ENCODE measurements at regions of chr4 and their contacts with region 1.

Region 1: DNA sequence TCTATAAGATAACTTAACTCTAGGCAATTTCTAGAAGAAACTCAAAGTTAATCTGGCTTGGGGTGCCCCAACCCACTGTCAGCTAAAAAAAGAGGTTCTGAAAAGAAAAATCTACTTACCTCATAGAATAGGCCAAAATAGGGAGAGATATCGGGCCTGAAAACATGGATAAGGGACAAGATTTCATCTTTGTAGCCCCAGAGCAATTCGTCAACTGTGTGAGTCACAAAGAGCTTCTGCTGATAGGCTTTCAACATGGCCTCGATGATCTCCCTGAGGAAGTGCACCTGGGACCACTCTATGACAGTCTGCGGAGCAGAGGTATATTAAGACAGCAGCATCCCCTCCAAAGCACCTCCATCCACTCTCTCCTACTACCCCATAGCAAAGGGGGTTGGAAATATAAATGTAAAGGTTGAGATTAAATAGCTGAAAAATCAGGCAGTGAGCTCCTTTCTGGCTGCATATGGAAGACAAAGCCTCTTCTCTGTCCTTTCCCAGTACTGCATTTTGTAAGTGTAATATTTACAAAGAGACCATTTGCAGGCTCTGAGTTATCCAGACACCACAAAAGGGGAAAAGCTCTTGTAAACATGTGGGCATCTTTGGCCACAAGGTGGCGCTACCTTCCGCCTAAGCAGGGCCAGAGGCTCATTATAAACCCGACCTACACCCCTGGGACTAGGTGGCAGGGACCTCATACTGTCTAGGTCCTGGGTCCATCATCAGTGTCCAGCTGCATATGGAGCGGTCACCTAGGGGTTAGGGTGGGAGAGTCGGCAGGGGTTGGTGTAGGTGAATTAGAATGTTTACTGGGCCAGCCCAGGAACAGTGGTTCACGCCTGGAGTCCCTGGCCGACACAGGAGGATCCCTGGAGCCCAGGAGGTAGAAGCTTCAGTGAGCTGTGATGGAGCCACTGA is 31.5 kb upstream of the NUP54 start:
- DNase-seq: peak; percentile 59 to 93
- H3K4me3 ChIP-seq: no peak overlapping the region
- H3K27ac ChIP-seq: no peak overlapping the region
- H3K4me1 ChIP-seq: no peaks in the 10 kb centered on the region
- H3K27me3 ChIP-seq: no peaks in the 10 kb centered on the region
- CTCF ChIP-seq: peak; percentile 77 to 87 (median 86)
- EP300 ChIP-seq: no peak
- POLR2A ChIP-seq: no peak
- RAD21 ChIP-seq: peak; percentile 95

Region 2: DNA sequence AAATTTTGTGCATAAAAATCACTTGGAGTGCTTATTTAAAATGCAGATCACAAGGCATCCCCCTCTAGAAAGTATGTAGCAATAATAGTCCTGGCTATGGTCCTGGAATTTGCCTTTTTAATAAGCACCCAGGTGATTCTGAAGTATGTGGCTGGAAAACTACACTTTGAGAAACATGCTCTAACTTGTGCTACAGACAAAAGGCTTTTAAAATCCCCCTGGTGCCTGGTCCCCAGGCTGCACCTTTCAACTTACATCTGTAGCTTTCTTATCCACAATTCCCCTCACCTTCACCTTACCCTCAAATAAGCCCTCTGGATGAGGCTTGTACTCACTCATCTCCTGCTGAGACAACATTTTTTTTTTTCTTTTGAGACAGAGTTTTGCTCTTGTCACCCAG is 84.1 kb before region 1 on chr4:
- CTCF ChIA-PET with region 1: no interaction called
- POLR2A ChIA-PET with region 1: no interaction called
- DNase-seq: no peak
- H3K4me3 ChIP-seq: no peak overlapping the region
- H3K27ac ChIP-seq: no peak overlapping the region
- H3K4me1 ChIP-seq: no peaks in the 10 kb centered on the region
- H3K27me3 ChIP-seq: no peaks in the 10 kb centered on the region
- CTCF ChIP-seq: no peak
- EP300 ChIP-seq: no peak
- POLR2A ChIP-seq: no peak
- RAD21 ChIP-seq: no peak

Region 3: DNA sequence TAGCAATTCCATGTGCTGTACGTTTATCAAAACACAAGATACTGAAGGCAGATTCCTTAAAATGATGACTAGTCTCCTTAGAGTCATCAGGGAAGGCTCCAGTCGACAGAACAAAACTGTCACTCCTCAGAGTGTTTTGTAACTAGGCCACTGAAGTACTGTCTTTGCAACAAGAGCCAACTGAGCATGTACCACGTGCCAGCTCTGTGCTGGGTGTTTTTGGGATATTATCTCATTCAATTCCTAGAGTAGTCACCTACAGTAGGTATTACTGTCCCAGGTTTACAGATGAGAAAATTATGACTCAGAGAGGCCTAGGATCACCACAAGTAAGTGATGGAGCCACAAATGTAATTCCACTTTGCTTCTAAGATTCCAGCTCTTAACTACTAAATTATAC is 13.2 kb before region 1 on chr4:
- CTCF ChIA-PET with region 1: interaction called, 14 read pairs
- POLR2A ChIA-PET with region 1: no interaction called
- DNase-seq: no peak
- H3K4me3 ChIP-seq: no peak overlapping the region
- H3K27ac ChIP-seq: no peak overlapping the region
- H3K4me1 ChIP-seq: no peaks in the 10 kb centered on the region
- H3K27me3 ChIP-seq: no peaks in the 10 kb centered on the region
- CTCF ChIP-seq: no peak
- EP300 ChIP-seq: no peak
- POLR2A ChIP-seq: no peak
- RAD21 ChIP-seq: no peak

Region 4: DNA sequence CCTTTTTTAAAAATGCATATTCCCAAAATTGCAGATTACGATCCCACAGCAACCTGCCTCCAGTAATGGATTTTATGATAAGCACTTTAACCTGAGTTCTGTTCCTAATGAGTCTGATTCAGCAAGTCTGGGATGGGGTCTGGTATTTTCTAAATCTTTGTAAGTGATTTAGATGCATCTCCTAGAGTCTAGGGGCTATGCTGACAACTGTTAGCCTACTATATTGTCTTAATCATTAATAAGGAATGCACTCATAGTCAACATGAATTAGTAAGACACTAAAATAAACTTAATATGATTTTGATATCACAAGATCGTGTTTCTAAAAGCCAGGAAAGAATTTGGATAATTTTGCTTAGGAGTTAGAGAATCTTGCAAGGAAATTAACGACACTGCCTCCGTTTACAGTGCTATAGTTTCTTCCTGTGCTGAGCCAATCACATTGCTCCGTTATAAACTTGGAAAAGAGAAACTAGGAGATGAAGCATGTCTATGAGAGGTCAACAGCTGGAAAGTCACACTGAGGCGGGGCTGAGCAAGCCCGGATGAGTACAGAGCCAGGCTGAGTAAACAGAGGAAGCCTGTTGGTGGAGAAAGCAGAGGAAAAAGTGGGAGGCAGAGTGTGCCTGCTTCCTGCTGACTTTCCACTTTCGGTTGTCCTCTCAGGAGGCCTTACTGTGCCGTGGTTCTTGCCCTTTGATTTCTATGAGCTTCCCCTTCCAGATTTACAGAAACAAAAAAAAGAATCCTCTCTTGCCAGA is 28.5 kb after region 1 on chr4:
- CTCF ChIA-PET with region 1: interaction called, 11 read pairs
- POLR2A ChIA-PET with region 1: no interaction called
- DNase-seq: no peak
- H3K4me3 ChIP-seq: no peak overlapping the region
- H3K27ac ChIP-seq: no peak overlapping the region
- H3K4me1 ChIP-seq: peaks cover 0 to 3% (median 2%) of the 10 kb centered on the region in 4 experiments; a peak in 4 of 7 replicates
- H3K27me3 ChIP-seq: no peaks in the 10 kb centered on the region
- CTCF ChIP-seq: no peak
- EP300 ChIP-seq: no peak
- POLR2A ChIP-seq: no peak
- RAD21 ChIP-seq: no peak

Region 5: DNA sequence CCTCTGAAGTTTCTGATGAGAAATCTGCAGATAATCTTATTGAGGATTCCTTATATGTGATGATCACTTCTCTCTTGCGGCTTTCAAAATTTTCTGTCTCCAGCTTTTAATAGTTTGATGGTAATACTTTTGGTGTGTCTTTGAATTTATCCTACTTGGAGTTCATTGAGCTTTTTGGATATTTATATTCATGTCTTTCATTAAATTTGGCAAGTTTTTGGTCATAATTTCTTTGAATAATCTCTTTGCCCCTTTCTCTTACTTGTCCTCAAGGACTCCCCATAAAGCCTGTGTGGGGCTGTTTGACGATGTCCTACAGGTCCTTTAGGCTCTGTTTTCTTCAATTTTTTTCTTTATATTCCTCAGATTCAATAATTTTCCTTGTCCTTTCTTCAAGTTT is 60.6 kb after region 1 on chr4:
- CTCF ChIA-PET with region 1: interaction called, 11 read pairs
- POLR2A ChIA-PET with region 1: no interaction called
- DNase-seq: no peak
- H3K4me3 ChIP-seq: no peak overlapping the region
- H3K27ac ChIP-seq: no peak overlapping the region
- H3K4me1 ChIP-seq: peaks cover 0 to 3% (median 0%) of the 10 kb centered on the region in 4 experiments; a peak in 2 of 7 replicates
- H3K27me3 ChIP-seq: no peaks in the 10 kb centered on the region
- CTCF ChIP-seq: no peak
- EP300 ChIP-seq: no peak
- POLR2A ChIP-seq: no peak
- RAD21 ChIP-seq: no peak

Region 6: GRCh38 chr4:76305971-76306881 is 126.6 kb after region 1 on chr4 and contains the start of gene STBD1:
- CTCF ChIA-PET with region 1: interaction called, 30 read pairs
- POLR2A ChIA-PET with region 1: no interaction called
- DNase-seq: peak; percentile 47 to 90
- H3K4me3 ChIP-seq: peak within 1 kb of the TSS; percentile 60 to 81 (median 72)
- H3K27ac ChIP-seq: no peak within 1 kb of the TSS
- H3K4me1 ChIP-seq: no peaks in the 10 kb centered on the region; a peak in 1 of 7 replicates
- H3K27me3 ChIP-seq: peaks cover 2 to 17% (median 11%) of the 10 kb centered on the region in 4 experiments
- CTCF ChIP-seq: no peak
- EP300 ChIP-seq: no peak
- POLR2A ChIP-seq: peak in 1 of 2 experiments; percentile 34; a peak in 1 of 3 replicates
- RAD21 ChIP-seq: no peak
- total RNA-seq, gene STBD1: 1.4 and 1.7 TPM in 2 replicates

Region 7: GRCh38 chr4:76430519-76431388 is 251.1 kb after region 1 on chr4:
- CTCF ChIA-PET with region 1: interaction called, 12 read pairs
- POLR2A ChIA-PET with region 1: no interaction called
- DNase-seq: no peak
- H3K4me3 ChIP-seq: no peak overlapping the region
- H3K27ac ChIP-seq: no peak overlapping the region
- H3K4me1 ChIP-seq: peaks cover 0 to 10% (median 8%) of the 10 kb centered on the region in 4 experiments; a peak in 4 of 7 replicates
- H3K27me3 ChIP-seq: no peaks in the 10 kb centered on the region
- CTCF ChIP-seq: peak in 2 of 3 experiments; percentile 43 to 45; a peak in 2 of 4 replicates
- EP300 ChIP-seq: no peak
- POLR2A ChIP-seq: no peak
- RAD21 ChIP-seq: peak; percentile 72 to 83

Region 8: DNA sequence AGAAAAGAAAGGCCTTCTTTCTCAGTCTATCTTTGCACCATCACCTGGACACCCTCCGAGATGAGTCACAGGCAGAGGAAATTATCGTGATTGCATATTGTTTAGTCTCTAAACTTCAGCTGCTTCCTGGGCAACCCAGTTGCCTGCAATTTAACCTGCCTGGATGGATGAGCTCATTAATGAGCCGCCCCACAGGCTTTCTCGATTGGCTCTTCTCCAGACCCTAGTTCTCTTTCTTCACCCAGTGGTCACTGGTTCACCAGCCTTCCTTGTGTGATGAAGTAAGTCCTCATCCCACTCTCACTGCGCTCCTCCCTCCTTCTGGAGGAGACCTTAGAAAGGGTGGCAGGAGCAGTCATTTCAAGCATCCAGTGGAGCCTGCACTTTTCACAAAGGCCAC is 623.9 kb after region 1 on chr4:
- CTCF ChIA-PET with region 1: no interaction called
- POLR2A ChIA-PET with region 1: no interaction called
- DNase-seq: no peak
- H3K4me3 ChIP-seq: no peak overlapping the region; a peak in 1 of 8 replicates
- H3K27ac ChIP-seq: no peak overlapping the region
- H3K4me1 ChIP-seq: peaks cover 7 to 21% (median 15%) of the 10 kb centered on the region in 4 experiments
- H3K27me3 ChIP-seq: peaks cover 0 to 7% (median 2%) of the 10 kb centered on the region in 4 experiments; a peak in 5 of 7 replicates
- CTCF ChIP-seq: no peak
- EP300 ChIP-seq: no peak
- POLR2A ChIP-seq: no peak
- RAD21 ChIP-seq: no peak

Measured in H1 (cell line).